ENCODE measurements at regions of chr2 and their contacts with region 1.

Region 1: GRCh38 chr2:17637131-17637906 is 96.8 kb downstream of the VSNL1 start:
- DNase-seq: peak; percentile 32
- H3K4me3 ChIP-seq: no peak overlapping the region
- H3K27ac ChIP-seq: no peak overlapping the region
- H3K4me1 ChIP-seq: peaks cover 0 to 4% of the 10 kb centered on the region in 2 experiments; a peak in 1 of 4 replicates
- H3K27me3 ChIP-seq: no peaks in the 10 kb centered on the region
- CTCF ChIP-seq: no peak
- EP300 ChIP-seq: no peak
- RAD21 ChIP-seq: no peak

Region 2: GRCh38 chr2:17672583-17673317 is 35.4 kb after region 1 on chr2:
- CTCF ChIA-PET with region 1: interaction called, 471 read pairs
- POLR2A ChIA-PET with region 1: no interaction called
- DNase-seq: no peak
- H3K4me3 ChIP-seq: no peak overlapping the region
- H3K27ac ChIP-seq: peak overlapping the region in 1 of 2 experiments; percentile 59; a peak in 3 of 4 replicates
- H3K4me1 ChIP-seq: peaks cover 5 to 10% of the 10 kb centered on the region in 2 experiments; a peak in 1 of 4 replicates
- H3K27me3 ChIP-seq: no peaks in the 10 kb centered on the region
- CTCF ChIP-seq: 0 out of 2 replicates have a peak, but pooled peaks have one; percentile 28
- EP300 ChIP-seq: no peak
- RAD21 ChIP-seq: no peak

Region 3: DNA sequence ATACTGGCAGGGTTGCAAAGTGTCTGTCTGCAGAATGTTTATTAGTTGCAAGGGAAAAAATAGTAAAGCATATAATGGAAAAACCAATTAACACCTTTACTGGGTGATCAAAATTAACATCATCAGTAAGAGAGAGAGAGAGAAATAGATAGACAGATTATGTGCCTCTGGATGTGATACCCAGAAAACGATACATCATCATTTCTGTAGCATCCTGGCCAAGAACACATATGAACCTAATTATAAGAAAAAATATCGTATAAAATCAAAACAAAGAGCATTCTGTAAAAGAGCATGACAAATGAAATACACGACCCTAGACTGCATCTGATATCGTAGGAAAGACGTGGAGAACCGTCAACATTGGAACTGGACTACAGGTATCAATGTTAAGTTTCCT is 51.7 kb after region 1 on chr2:
- CTCF ChIA-PET with region 1: no interaction called
- POLR2A ChIA-PET with region 1: no interaction called
- DNase-seq: no peak
- H3K4me3 ChIP-seq: no peak overlapping the region
- H3K27ac ChIP-seq: no peak overlapping the region
- H3K4me1 ChIP-seq: no peaks in the 10 kb centered on the region
- H3K27me3 ChIP-seq: no peaks in the 10 kb centered on the region
- CTCF ChIP-seq: no peak
- EP300 ChIP-seq: no peak
- RAD21 ChIP-seq: no peak

Region 4: GRCh38 chr2:17736989-17737388 is 99.7 kb after region 1 on chr2:
- CTCF ChIA-PET with region 1: no interaction called
- POLR2A ChIA-PET with region 1: no interaction called
- DNase-seq: no peak
- H3K4me3 ChIP-seq: no peak overlapping the region
- H3K27ac ChIP-seq: peak overlapping the region in 1 of 2 experiments; percentile 89; a peak in 3 of 4 replicates
- H3K4me1 ChIP-seq: peaks cover 2 to 9% of the 10 kb centered on the region in 2 experiments; a peak in 3 of 4 replicates
- H3K27me3 ChIP-seq: no peaks in the 10 kb centered on the region
- CTCF ChIP-seq: no peak
- EP300 ChIP-seq: no peak
- RAD21 ChIP-seq: no peak

Region 5: GRCh38 chr2:18336975-18337374 is 699.7 kb after region 1 on chr2:
- CTCF ChIA-PET with region 1: no interaction called
- POLR2A ChIA-PET with region 1: no interaction called
- DNase-seq: no peak
- H3K4me3 ChIP-seq: no peak overlapping the region
- H3K27ac ChIP-seq: no peak overlapping the region
- H3K4me1 ChIP-seq: peaks cover 0 to 5% of the 10 kb centered on the region in 2 experiments; a peak in 1 of 4 replicates
- H3K27me3 ChIP-seq: no peaks in the 10 kb centered on the region
- CTCF ChIP-seq: no peak
- EP300 ChIP-seq: no peak
- RAD21 ChIP-seq: no peak

Measured in SK-N-SH (cell line).